Activated CD8-positive, alpha-beta memory T cell treated with anti-CD3 and anti-CD28 coated beads, Interleukin-2, amount 10 ng/mL, durations not matched to agents 7 days and 5 days (primary cell): ENCODE measurements at regions of chr7 and their contacts with region 1.

Region 1: DNA sequence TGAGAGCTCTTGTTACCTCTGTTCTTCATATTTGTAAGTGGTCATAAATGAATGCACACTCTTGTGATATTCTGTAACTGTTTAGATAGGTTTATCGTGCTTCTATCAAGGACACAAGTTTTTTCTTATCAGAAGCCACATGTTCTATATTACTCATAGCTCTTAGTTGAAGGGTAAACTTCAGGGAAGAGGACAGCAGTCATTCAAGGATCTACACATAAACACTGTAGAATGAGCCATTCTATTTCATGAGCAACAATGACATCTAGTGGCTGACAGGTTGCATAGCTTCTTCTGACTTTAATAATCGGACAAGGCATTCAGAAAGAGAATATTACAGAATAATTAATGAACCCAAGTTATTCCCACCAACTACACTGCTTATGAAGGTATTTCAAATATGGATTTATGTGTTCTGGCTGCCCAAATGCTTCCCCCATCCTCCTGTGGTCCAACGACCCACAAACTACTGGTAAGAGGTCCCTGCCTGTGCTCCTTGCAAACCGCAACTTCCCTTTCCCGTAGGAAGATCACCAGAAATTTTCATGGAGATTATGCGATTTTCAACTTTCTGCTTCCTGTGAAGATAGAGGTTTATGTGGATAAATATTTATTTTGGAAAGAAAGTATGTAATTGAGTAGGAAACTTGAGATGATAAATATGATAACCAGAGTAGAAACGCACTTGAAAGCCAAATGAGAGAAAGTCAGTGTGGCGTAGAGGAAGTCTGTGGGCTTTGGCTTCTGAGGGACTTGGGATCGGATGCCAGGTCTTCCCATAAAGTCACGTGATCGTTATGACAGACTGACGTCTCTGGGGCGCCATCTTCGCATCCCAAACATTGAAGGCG is 16.8 kb upstream of the ABCB5 start:
- DNase-seq: no peak
- ATAC-seq: peak; percentile 49
- H3K4me3 Mint-ChIP-seq: no peak overlapping the region
- H3K27ac Mint-ChIP-seq: no peak overlapping the region
- H3K4me1 Mint-ChIP-seq: no peaks in the 10 kb centered on the region
- H3K27me3 Mint-ChIP-seq: no peaks in the 10 kb centered on the region

Region 2: GRCh38 chr7:19708397-19709248 is 890.1 kb before region 1 on chr7 and contains the start of gene POLR1F:
- CTCF ChIA-PET with region 1: interaction called, 19 read pairs
- DNase-seq: peak; percentile 94
- ATAC-seq: peak; percentile 98
- H3K4me3 Mint-ChIP-seq: peak within 1 kb of the TSS; percentile 96
- H3K27ac Mint-ChIP-seq: peak within 1 kb of the TSS; percentile 86
- H3K4me1 Mint-ChIP-seq: peaks cover 35% of the 10 kb centered on the region
- H3K27me3 Mint-ChIP-seq: no peaks in the 10 kb centered on the region
- total RNA-seq, gene POLR1F: 18.5 to 27.9 TPM

Region 3: DNA sequence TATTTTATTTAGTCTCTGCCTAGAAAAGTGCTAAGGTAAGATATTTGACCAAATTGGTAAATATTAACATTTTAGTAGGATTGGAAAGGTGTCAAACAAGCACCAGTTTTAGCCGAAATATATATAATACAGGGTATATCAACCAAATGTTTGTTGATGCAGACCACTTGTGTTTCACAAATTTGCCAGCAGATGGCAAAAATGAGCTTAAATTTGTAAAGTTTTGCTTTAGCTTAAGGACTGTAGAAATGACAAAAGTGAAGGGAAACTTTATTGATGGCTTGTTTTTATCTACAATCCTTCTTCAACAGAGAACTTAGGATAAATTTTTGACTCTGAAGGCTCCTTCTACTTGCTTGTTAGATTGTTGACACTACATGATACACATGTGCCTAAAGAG is 885.0 kb before region 1 on chr7:
- CTCF ChIA-PET with region 1: interaction called, 19 read pairs
- DNase-seq: peak; percentile 57
- ATAC-seq: no peak
- H3K4me3 Mint-ChIP-seq: no peak overlapping the region
- H3K27ac Mint-ChIP-seq: no peak overlapping the region
- H3K4me1 Mint-ChIP-seq: peaks cover 9% of the 10 kb centered on the region
- H3K27me3 Mint-ChIP-seq: peaks cover 3% of the 10 kb centered on the region

Region 4: DNA sequence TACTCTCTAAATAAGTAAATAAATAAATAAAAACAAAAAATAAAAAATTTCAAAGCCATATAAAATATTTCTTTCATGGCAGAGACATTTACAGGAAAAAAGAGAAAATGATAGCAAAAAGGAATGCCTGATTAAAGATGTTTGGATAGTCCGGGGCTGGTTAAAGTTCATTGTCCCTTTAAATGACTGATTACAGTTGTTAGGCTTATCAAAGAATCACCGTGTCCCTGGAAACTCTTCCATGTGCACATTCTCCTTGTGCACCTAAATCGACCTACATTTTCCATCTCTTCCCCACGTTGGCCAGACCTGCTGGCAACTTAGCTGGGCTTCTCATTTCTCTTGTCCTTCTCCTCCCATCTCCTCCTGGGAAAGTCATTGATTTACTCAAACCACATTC is 85.9 kb after region 1 on chr7:
- CTCF ChIA-PET with region 1: no interaction called
- DNase-seq: no peak
- ATAC-seq: no peak
- H3K4me3 Mint-ChIP-seq: no peak overlapping the region
- H3K27ac Mint-ChIP-seq: no peak overlapping the region
- H3K4me1 Mint-ChIP-seq: no peaks in the 10 kb centered on the region
- H3K27me3 Mint-ChIP-seq: no peaks in the 10 kb centered on the region